ENCODE measurements at regions of chr3 and their contacts with region 1.

Region 1: DNA sequence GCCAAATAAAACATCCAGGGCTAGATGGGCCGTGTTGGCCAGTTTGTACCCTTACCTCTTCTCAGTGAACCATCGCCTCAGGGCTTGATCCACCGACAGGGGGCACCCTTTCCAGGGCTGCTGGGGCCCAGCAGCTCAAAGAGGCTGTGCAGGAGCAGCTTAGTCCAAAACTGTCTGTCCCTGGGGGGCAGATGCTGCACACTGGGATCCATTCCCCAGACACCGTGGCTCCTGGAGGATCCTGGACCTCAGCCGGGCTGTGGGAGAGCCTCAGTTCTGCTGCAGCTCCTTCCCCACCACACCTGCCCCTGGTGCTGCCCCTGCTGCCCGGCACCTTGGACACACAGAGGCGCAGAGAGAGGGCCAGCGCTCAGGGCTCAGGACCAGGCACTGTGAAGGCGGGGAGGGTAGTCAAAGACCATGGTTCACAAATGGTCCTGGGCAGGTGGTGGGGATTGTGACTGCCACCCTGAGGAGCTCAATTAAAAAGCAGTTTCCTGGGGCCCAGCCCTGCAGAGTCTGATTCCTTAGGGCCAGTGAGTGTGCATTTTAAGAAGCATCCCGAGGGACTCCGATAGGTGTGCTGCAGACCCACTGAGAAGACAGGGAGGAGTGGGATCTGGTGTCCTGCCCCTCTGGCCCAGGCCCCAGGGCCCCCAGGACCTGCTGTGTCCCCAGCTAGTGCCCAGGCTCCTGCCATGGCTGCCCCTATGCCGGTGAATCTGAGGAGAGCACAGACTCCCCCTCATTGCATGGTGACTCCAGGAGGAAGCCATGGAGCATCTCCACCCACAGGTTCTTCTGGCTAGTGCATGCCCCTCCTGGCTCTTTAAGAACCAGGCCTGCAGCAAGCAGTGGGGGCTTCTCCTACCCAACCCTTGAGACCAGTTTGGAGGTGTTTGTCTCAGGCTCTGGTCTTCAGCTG is 86.5 kb upstream of the PRR20G start:
- DNase-seq: peak in 1 of 2 experiments; percentile 85
- H3K4me3 ChIP-seq: no peak overlapping the region
- H3K27ac ChIP-seq: no peak overlapping the region
- H3K4me1 ChIP-seq: 0 out of 7 replicates have a peak, but pooled peaks cover 0 to 4% (median 0%) of the 10 kb centered on the region in 4 experiments
- H3K27me3 ChIP-seq: no peaks in the 10 kb centered on the region
- CTCF ChIP-seq: peak; percentile 73 to 81 (median 78)
- EP300 ChIP-seq: no peak
- POLR2A ChIP-seq: no peak
- RAD21 ChIP-seq: peak; percentile 59 to 75

Region 2: DNA sequence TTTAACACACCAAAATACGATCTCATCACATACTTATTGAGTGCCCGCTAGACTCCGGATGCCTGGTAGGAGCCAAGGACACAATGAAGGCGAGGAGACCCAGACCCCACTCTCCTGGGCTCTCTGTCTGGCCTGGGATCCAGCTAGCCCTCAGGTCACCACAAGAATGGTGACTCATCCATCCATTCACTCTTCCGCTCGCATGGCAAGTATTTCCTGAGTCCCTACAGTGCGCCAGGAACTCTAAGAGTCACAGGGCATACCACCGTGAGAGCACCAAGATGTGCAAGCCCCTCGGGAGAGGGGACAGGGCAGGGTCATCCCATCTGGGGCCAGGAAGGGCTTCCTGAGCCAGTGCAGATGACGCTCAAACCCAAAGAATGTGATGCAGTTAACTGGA is 15.1 kb after region 1 on chr3:
- CTCF ChIA-PET with region 1: interaction called, 43 read pairs
- POLR2A ChIA-PET with region 1: no interaction called
- DNase-seq: no peak
- H3K4me3 ChIP-seq: no peak overlapping the region
- H3K27ac ChIP-seq: no peak overlapping the region
- H3K4me1 ChIP-seq: no peaks in the 10 kb centered on the region; a peak in 1 of 7 replicates
- H3K27me3 ChIP-seq: no peaks in the 10 kb centered on the region
- CTCF ChIP-seq: no peak
- EP300 ChIP-seq: no peak
- POLR2A ChIP-seq: no peak
- RAD21 ChIP-seq: no peak

Region 3: GRCh38 chr3:127406309-127407025 is 32.1 kb after region 1 on chr3:
- CTCF ChIA-PET with region 1: interaction called, 12 read pairs
- POLR2A ChIA-PET with region 1: no interaction called
- DNase-seq: no peak
- H3K4me3 ChIP-seq: no peak overlapping the region
- H3K27ac ChIP-seq: no peak overlapping the region
- H3K4me1 ChIP-seq: peaks cover 0 to 14% (median 2%) of the 10 kb centered on the region in 4 experiments; a peak in 4 of 7 replicates
- H3K27me3 ChIP-seq: no peaks in the 10 kb centered on the region; a peak in 1 of 7 replicates
- CTCF ChIP-seq: peak in 2 of 3 experiments; percentile 33 to 38; a peak in 2 of 4 replicates
- EP300 ChIP-seq: no peak
- POLR2A ChIP-seq: no peak
- RAD21 ChIP-seq: peak in 1 of 2 experiments; percentile 2; a peak in 1 of 4 replicates

Region 4: DNA sequence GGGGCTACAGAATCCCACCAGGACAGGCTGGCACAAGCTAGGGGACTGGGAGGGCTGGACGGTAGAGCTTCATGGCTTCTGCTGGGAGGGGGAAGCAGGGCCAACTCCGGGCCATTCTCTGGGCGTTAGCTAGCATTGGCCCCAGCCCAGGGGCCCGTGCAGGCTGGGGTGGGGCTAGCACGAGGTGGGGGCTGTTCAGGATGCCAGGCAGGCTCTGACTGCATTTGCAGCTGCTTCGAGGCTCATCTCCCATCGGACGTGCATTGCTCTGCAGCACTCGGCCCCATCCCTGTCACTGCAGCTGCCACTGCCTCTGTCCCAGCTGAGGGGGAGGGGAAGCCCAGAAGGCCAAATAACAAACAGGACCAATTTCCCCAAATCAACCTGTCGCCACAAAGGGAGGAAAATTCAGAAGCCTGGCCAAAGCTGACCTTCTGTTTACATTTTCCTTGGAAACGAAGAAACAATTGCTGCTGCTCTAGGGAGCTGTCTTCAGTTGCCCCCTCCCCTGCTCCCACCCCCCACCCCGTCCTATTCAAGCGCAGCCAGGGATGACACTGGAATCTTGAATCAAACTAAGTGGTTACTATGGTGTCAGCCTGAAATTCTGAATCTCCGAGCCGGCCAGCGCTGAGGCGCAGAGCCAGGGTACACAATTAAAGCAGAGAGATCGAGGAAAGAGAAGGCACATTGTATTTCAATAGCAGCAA is 52.3 kb after region 1 on chr3:
- CTCF ChIA-PET with region 1: interaction called, 13 read pairs
- POLR2A ChIA-PET with region 1: no interaction called
- DNase-seq: peak in 1 of 2 experiments; percentile 47
- H3K4me3 ChIP-seq: no peak overlapping the region
- H3K27ac ChIP-seq: no peak overlapping the region
- H3K4me1 ChIP-seq: peaks cover 4 to 32% (median 17%) of the 10 kb centered on the region in 4 experiments
- H3K27me3 ChIP-seq: no peaks in the 10 kb centered on the region
- CTCF ChIP-seq: no peak
- EP300 ChIP-seq: no peak
- POLR2A ChIP-seq: no peak
- RAD21 ChIP-seq: no peak